Ovary (tissue), 10 donors: ENCODE measurements at regions of chr10 and their contacts with region 1.

Region 1: DNA sequence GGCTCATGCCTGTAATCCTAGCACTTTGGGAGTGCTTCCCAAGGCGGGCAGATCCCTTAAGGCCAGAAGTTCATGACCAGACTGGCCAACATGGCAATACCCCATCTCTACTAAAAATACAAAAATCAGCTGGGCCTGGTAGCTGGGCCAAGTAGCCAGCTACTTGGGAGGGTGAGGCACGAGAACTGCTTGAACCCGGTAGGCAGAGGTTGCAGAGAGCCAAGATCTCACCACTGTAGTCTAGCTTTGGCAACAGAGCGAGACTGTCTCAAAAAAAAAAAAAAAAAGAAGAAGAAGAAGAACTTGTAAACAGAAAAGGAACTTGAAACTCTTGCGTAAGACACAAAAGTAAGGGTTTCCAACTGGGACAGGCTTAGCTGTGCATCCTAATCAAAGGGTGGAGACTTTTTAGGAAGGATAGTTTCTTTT is 5.6 kb upstream of the IFIT2 start:
- DNase-seq: no peak
- H3K4me3 ChIP-seq: no peak overlapping the region
- H3K27ac ChIP-seq: peak overlapping the region in 1 of 2 donors; percentile 22
- H3K4me1 ChIP-seq: peaks cover 6% of the 10 kb centered on the region
- H3K27me3 ChIP-seq: no peaks in the 10 kb centered on the region
- CTCF ChIP-seq: no peak
- EP300 ChIP-seq: no peak
- POLR2A ChIP-seq: no peak

Region 2: GRCh38 chr10:88702848-88703597 is 593.2 kb before region 1 on chr10:
- intact Hi-C with region 1: loop called in 1 of 4 experiments (anchors 5 kb)
- DNase-seq: no peak
- H3K4me3 ChIP-seq: no peak overlapping the region
- H3K27ac ChIP-seq: no peak overlapping the region
- H3K4me1 ChIP-seq: peaks cover 1% of the 10 kb centered on the region
- H3K27me3 ChIP-seq: no peaks in the 10 kb centered on the region
- CTCF ChIP-seq: no peak
- EP300 ChIP-seq: no peak
- POLR2A ChIP-seq: no peak

Region 3: GRCh38 chr10:89314676-89315075 is 18.4 kb after region 1 on chr10:
- intact Hi-C with region 1: no loop called
- DNase-seq: no peak
- H3K4me3 ChIP-seq: no peak overlapping the region
- H3K27ac ChIP-seq: no peak overlapping the region
- H3K4me1 ChIP-seq: no peaks in the 10 kb centered on the region
- H3K27me3 ChIP-seq: no peaks in the 10 kb centered on the region
- CTCF ChIP-seq: no peak
- EP300 ChIP-seq: no peak
- POLR2A ChIP-seq: no peak